ENCODE measurements at regions of chr17 and their contacts with region 1.

Region 1: GRCh38 chr17:4625181-4625617 is 16.3 kb downstream of the ALOX15 start:
- DNase-seq: no peak
- ATAC-seq: no peak
- H3K4me3 ChIP-seq: no peak overlapping the region
- H3K27ac ChIP-seq: no peak overlapping the region
- H3K4me1 ChIP-seq: no peaks in the 10 kb centered on the region
- H3K27me3 ChIP-seq: no peaks in the 10 kb centered on the region

Region 2: GRCh38 chr17:4565209-4566141 is 59.7 kb before region 1 on chr17:
- intact Hi-C with region 1: loop called (anchors 2 kb)
- DNase-seq: peak in 1 of 2 donors; percentile 74
- ATAC-seq: peak; percentile 89
- H3K4me3 ChIP-seq: no peak overlapping the region
- H3K27ac ChIP-seq: no peak overlapping the region
- H3K4me1 ChIP-seq: peaks cover 0 to 4% of the 10 kb centered on the region in 2 donors
- H3K27me3 ChIP-seq: no peaks in the 10 kb centered on the region

Measured in aorta (tissue), 5 donors.